SK-N-SH (cell line): ENCODE measurements at regions of chr10 and their contacts with region 1.

Region 1: DNA sequence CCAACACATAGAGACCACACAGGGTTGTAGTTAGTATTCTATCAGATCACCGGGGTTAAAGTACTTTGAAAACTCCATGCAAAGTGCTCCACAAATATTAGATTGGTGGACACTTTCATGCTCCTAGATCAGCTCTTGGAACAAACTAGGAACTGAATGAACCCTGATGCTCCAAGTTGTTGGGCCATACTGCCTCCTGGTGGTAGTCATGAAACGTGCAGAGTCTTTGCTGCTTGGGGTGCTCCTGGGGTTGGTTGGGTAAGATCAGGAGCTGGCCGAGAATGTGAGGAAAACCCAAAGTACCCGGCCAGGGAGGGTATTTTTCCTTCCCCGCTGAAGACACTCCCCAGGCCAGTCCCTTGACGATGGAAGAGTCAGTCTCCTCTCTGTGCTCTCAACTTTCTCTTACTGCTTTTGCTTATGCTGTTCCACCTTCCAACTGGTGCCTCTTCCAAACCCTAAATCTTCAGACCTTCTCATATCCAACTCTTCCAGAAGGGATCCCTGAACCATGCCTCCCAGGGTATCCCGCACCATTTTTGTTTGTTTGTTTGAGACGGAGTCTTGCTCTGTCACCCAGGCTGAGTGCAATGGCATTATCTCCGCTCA is 920 bp upstream of the RPEL1 start:
- DNase-seq: peak; percentile 80
- H3K4me3 ChIP-seq: no peak overlapping the region; a peak in 1 of 4 replicates
- H3K27ac ChIP-seq: no peak overlapping the region
- H3K4me1 ChIP-seq: peaks cover 3 to 11% of the 10 kb centered on the region in 2 experiments; a peak in 2 of 4 replicates
- H3K27me3 ChIP-seq: no peaks in the 10 kb centered on the region
- CTCF ChIP-seq: peak; percentile 92
- EP300 ChIP-seq: no peak
- RAD21 ChIP-seq: peak; percentile 87

Region 2: GRCh38 chr10:103040418-103040817 is 204.3 kb before region 1 on chr10:
- CTCF ChIA-PET with region 1: no interaction called
- POLR2A ChIA-PET with region 1: no interaction called
- DNase-seq: no peak
- H3K4me3 ChIP-seq: no peak overlapping the region
- H3K27ac ChIP-seq: no peak overlapping the region
- H3K4me1 ChIP-seq: no peaks in the 10 kb centered on the region
- H3K27me3 ChIP-seq: no peaks in the 10 kb centered on the region
- CTCF ChIP-seq: no peak
- EP300 ChIP-seq: no peak
- RAD21 ChIP-seq: no peak

Region 3: GRCh38 chr10:103069453-103070331 is 175.1 kb before region 1 on chr10:
- CTCF ChIA-PET with region 1: interaction called, 12 read pairs
- POLR2A ChIA-PET with region 1: no interaction called
- DNase-seq: peak; percentile 77
- H3K4me3 ChIP-seq: no peak overlapping the region; a peak in 1 of 4 replicates
- H3K27ac ChIP-seq: no peak overlapping the region
- H3K4me1 ChIP-seq: peaks cover 0 to 22% of the 10 kb centered on the region in 2 experiments; a peak in 1 of 4 replicates
- H3K27me3 ChIP-seq: no peaks in the 10 kb centered on the region
- CTCF ChIP-seq: peak; percentile 83
- EP300 ChIP-seq: no peak
- RAD21 ChIP-seq: peak; percentile 93

Region 4: GRCh38 chr10:103227416-103227815 is 17.4 kb before region 1 on chr10:
- CTCF ChIA-PET with region 1: interaction called, 11 read pairs
- POLR2A ChIA-PET with region 1: no interaction called
- DNase-seq: no peak
- H3K4me3 ChIP-seq: no peak overlapping the region
- H3K27ac ChIP-seq: no peak overlapping the region
- H3K4me1 ChIP-seq: peaks cover 0 to 18% of the 10 kb centered on the region in 2 experiments; a peak in 1 of 4 replicates
- H3K27me3 ChIP-seq: no peaks in the 10 kb centered on the region
- CTCF ChIP-seq: no peak
- EP300 ChIP-seq: no peak
- RAD21 ChIP-seq: no peak

Region 5: DNA sequence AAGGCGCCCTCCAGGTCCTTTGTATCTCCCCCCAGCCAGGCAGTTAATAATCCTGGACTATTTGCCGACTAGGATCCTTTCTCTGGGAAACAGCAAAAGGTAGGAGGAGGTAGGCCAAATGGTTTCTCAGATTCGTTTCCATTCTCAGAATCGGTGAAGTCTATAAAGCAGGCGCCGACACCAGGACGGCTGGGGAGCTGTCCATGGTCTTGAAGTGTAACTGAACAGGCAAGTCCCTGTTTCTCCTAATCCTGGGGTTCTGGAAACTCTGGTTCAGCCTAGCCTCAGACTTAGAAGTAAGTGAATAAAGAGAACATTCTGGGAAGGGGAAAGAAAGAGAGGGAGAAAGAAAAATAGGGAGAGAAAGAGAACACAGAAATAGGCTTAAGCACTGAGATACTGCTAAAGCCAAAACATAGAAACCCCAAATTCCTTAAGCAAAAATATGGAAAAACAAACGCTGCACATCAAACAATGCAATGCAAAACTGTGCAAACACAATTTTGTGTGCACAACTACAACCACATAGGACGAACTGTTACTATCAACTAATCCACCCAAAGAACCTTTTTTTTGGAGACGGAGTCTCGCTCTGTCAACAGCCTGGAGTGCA is 21.1 kb after region 1 on chr10:
- CTCF ChIA-PET with region 1: no interaction called
- POLR2A ChIA-PET with region 1: no interaction called
- DNase-seq: no peak
- H3K4me3 ChIP-seq: no peak overlapping the region
- H3K27ac ChIP-seq: no peak overlapping the region
- H3K4me1 ChIP-seq: no peaks in the 10 kb centered on the region
- H3K27me3 ChIP-seq: no peaks in the 10 kb centered on the region
- CTCF ChIP-seq: no peak
- EP300 ChIP-seq: no peak
- RAD21 ChIP-seq: no peak